ENCODE measurements at regions of chr5 and their contacts with region 1.

Region 1: GRCh38 chr5:150398722-150399523 is 13.8 kb downstream of the CD74 start:
- DNase-seq: no peak
- ATAC-seq: peak; percentile 66
- H3K4me3 ChIP-seq: no peak overlapping the region
- H3K27ac ChIP-seq: no peak overlapping the region
- H3K4me1 ChIP-seq: peaks cover 5% of the 10 kb centered on the region
- H3K27me3 ChIP-seq: no peaks in the 10 kb centered on the region
- CTCF ChIP-seq: peak; percentile 74 to 81 (median 77)
- EP300 ChIP-seq: no peak
- POLR2A ChIP-seq: peak; percentile 77
- RAD21 ChIP-seq: peak; percentile 71

Region 2: GRCh38 chr5:150363185-150363584 is 35.7 kb before region 1 on chr5:
- CTCF ChIA-PET with region 1: interaction called, 6 read pairs
- POLR2A ChIA-PET with region 1: no interaction called
- RAD21 ChIA-PET with region 1: no interaction called
- SMC1A ChIA-PET with region 1: interaction called, 11 read pairs
- in situ Hi-C with region 1: no loop called
- intact Hi-C with region 1: no loop called
- DNase-seq: no peak
- ATAC-seq: no peak
- H3K4me3 ChIP-seq: no peak overlapping the region
- H3K27ac ChIP-seq: no peak overlapping the region
- H3K4me1 ChIP-seq: peaks cover 25% of the 10 kb centered on the region
- H3K27me3 ChIP-seq: no peaks in the 10 kb centered on the region
- CTCF ChIP-seq: no peak
- EP300 ChIP-seq: no peak
- POLR2A ChIP-seq: no peak
- RAD21 ChIP-seq: no peak

Region 3: DNA sequence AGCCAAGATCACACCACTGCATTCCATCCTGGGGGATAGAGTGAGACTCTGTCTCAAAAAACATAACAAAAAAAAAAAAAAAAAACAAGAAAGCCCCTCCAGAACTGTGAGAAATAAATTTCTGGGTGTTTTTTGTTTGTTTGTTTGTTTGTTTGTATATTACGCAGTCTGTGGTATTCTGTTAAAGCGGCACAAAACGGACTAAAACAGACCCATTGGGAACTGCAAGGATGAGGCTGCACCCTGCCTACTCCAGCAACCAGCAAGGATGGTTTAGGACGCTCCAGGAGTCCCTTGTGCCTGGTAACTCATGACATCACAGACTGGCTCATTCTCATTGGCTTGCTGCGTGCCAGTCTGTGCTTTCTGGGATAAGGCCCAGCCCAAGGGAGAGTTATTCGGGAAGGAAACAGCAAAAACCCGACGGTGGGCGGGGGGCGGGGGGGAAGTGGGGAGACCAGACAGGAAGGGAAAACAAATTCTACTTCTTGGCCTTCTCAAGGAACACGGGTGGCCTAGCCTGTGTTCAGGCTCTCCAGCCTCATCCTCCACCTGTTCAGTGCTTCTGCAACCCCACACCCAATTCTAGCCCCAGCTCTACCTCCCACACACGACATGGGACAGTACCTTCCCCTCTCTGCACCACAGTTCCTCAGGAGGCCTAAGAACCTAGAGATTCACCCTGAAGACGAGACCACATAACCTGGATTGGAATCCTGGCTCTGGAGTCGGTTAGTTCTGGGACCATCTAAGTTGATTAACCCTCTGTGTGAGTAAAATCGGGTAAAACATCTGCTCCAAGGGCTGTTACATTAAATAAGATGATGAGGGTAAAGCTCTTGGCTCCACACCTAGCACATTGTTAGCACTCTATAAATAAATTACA is 11.0 kb after region 1 on chr5:
- CTCF ChIA-PET with region 1: interaction called, 35 read pairs
- POLR2A ChIA-PET with region 1: interaction called, 38 read pairs
- RAD21 ChIA-PET with region 1: interaction called, 30 read pairs
- SMC1A ChIA-PET with region 1: interaction called, 15 read pairs
- in situ Hi-C with region 1: no loop called
- intact Hi-C with region 1: no loop called
- DNase-seq: peak; percentile 84
- ATAC-seq: peak; percentile 13
- H3K4me3 ChIP-seq: peak overlapping the region; percentile 99
- H3K27ac ChIP-seq: peak overlapping the region; percentile 100
- H3K4me1 ChIP-seq: peaks cover 32% of the 10 kb centered on the region
- H3K27me3 ChIP-seq: no peaks in the 10 kb centered on the region
- CTCF ChIP-seq: no peak
- EP300 ChIP-seq: no peak
- POLR2A ChIP-seq: peak; percentile 89
- RAD21 ChIP-seq: no peak

Region 4: DNA sequence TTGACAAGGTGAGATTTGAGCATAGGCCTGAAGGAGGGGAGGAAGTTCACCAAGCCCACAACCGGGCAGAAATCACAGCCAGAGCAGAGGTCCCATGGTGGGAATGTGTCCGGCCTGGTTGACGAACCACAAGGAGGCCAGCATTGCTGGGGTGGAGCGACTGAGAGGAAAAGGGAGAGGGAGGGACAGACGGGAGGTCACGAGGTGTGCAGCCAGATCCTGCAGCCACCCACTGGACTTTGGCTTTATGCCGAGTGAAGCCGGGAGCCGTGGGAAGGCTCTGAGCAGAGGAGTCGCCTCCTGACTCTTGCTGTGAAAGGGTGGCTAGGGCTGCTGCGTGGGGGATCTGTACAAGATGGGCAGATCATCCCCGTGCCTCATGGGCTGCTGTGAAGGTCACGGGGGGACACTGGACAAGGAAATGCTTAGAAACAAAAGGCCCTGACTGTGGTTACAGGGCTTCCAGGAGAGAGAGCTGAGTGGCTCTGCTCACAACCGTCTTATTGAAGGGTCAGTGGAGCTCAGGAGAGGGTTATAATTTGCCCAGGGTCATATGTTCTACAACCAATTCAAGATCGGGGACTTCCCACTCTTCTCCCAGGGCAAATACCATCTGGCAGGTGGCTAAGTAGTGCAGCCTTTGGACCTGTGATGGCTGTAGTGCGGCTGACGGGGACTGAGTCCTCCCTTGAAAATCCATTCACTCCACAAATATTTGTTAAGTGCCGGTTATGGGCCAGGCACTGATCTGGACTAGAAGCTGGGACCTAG is 29.4 kb after region 1 on chr5:
- CTCF ChIA-PET with region 1: interaction called, 274 read pairs
- POLR2A ChIA-PET with region 1: interaction called, 39 read pairs
- RAD21 ChIA-PET with region 1: interaction called, 115 read pairs
- SMC1A ChIA-PET with region 1: interaction called, 127 read pairs
- in situ Hi-C with region 1: no loop called
- intact Hi-C with region 1: no loop called
- DNase-seq: no peak
- ATAC-seq: peak; percentile 29
- H3K4me3 ChIP-seq: no peak overlapping the region
- H3K27ac ChIP-seq: no peak overlapping the region
- H3K4me1 ChIP-seq: peaks cover 7% of the 10 kb centered on the region
- H3K27me3 ChIP-seq: no peaks in the 10 kb centered on the region
- CTCF ChIP-seq: no peak
- EP300 ChIP-seq: no peak
- POLR2A ChIP-seq: no peak
- RAD21 ChIP-seq: no peak

Region 5: GRCh38 chr5:150734579-150735384 is 335.9 kb after region 1 on chr5:
- CTCF ChIA-PET with region 1: no interaction called
- POLR2A ChIA-PET with region 1: no interaction called
- RAD21 ChIA-PET with region 1: no interaction called
- SMC1A ChIA-PET with region 1: no interaction called
- in situ Hi-C with region 1: no loop called
- intact Hi-C with region 1: no loop called
- DNase-seq: peak; percentile 53
- ATAC-seq: peak; percentile 96
- H3K4me3 ChIP-seq: no peak overlapping the region
- H3K27ac ChIP-seq: peak overlapping the region; percentile 67
- H3K4me1 ChIP-seq: peaks cover 14% of the 10 kb centered on the region
- H3K27me3 ChIP-seq: no peaks in the 10 kb centered on the region
- CTCF ChIP-seq: peak; percentile 10 to 21 (median 19); a peak in 3 of 6 replicates
- EP300 ChIP-seq: no peak
- POLR2A ChIP-seq: no peak
- RAD21 ChIP-seq: no peak

Measured in GM12878 (cell line).